Ovary (tissue), 10 donors: ENCODE measurements at regions of chr5 and their contacts with region 1.

Region 1: DNA sequence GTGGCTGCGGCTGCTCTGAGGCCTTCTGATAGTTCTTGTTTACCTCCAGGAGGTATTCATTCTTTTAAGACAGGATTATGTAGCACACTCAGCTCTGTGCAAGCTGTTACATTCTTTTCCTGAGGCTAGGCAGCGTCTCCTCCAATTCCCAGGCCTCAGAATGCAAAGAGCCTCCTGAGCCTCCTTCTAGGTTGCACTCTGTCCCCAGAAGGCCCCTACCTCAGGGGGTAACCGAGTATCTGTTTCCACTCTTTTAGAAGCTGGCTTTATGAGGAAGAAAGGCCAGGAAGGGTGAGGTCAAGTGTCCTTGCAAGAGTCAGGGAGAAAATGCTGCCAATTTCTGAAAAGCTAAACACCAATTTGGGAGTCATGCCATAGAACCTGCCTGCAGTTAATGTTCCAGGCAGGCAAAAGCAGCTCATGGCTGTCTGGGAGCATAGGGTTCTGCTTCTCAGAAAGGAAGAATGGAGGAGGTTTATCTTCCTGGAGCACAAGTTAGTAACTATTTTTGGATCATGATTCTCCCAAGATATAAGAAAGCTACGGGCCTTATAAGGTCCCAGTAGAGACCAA is 178.9 kb downstream of the SEMA6A start:
- DNase-seq: peak in 1 of 5 donors; percentile 24
- H3K4me3 ChIP-seq: no peak overlapping the region
- H3K27ac ChIP-seq: no peak overlapping the region
- H3K4me1 ChIP-seq: peaks cover 8% of the 10 kb centered on the region
- H3K27me3 ChIP-seq: no peaks in the 10 kb centered on the region
- CTCF ChIP-seq: no peak
- EP300 ChIP-seq: no peak
- POLR2A ChIP-seq: no peak

Region 2: DNA sequence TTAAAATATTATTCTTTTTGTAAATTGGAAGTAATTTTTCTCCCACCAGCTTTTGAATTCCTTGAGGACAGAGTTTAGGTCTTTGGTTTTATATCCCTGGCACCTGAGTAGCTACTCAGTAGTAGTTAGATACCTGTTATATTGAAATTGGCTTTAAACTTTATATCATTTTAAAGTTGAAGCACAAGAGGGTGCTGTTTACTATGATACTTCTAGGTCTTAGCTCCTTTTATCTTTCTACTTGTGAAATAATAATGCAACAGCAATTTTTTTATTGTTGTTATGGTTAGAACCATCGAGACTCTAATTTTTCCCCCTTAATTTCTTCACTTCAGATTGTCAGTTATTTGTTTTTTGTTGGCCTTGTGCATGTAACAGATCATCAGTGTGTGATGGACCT is 507.7 kb before region 1 on chr5:
- intact Hi-C with region 1: no loop called
- DNase-seq: no peak
- H3K4me3 ChIP-seq: no peak overlapping the region
- H3K27ac ChIP-seq: no peak overlapping the region
- H3K4me1 ChIP-seq: peaks cover 2% of the 10 kb centered on the region
- H3K27me3 ChIP-seq: no peaks in the 10 kb centered on the region
- CTCF ChIP-seq: peak in 2 of 3 donors; percentile 28 to 43
- EP300 ChIP-seq: no peak
- POLR2A ChIP-seq: no peak

Region 3: DNA sequence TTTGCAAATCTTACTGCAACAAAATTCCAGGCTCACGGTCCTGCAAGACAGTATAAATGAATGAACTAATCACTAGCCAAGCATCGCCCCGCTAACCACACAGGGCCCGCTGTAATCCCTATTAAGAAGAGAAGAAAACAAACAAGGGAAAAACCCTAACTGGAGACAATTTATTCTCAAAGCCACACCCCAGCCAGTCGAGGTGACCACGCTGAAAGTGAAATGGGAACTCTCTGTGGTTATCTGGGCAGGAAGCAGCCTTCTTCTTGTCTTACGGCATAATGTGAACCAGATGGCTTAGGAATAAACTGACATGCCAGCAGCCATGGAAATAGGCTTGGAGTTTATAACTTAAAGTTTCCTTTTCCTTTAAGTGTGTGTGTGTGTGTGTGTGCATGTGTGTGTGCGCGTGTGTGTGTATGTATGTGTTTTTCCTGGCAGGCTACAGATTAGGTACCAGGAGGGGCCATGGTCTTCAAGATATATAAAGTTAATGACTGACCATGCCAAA is 58.8 kb after region 1 on chr5:
- intact Hi-C with region 1: loop called in 1 of 4 experiments (anchors 2 kb)
- DNase-seq: no peak
- H3K4me3 ChIP-seq: no peak overlapping the region
- H3K27ac ChIP-seq: no peak overlapping the region
- H3K4me1 ChIP-seq: peaks cover 1% of the 10 kb centered on the region
- H3K27me3 ChIP-seq: no peaks in the 10 kb centered on the region
- CTCF ChIP-seq: no peak
- EP300 ChIP-seq: no peak
- POLR2A ChIP-seq: no peak

Region 4: GRCh38 chr5:116532762-116533525 is 137.2 kb after region 1 on chr5:
- intact Hi-C with region 1: no loop called
- DNase-seq: no peak
- H3K4me3 ChIP-seq: no peak overlapping the region
- H3K27ac ChIP-seq: no peak overlapping the region
- H3K4me1 ChIP-seq: peaks cover 4% of the 10 kb centered on the region
- H3K27me3 ChIP-seq: no peaks in the 10 kb centered on the region
- CTCF ChIP-seq: no peak
- EP300 ChIP-seq: no peak
- POLR2A ChIP-seq: no peak

Region 5: GRCh38 chr5:116763987-116764866 is 368.5 kb after region 1 on chr5:
- intact Hi-C with region 1: no loop called
- DNase-seq: no peak
- H3K4me3 ChIP-seq: no peak overlapping the region
- H3K27ac ChIP-seq: no peak overlapping the region
- H3K4me1 ChIP-seq: peaks cover 3% of the 10 kb centered on the region
- H3K27me3 ChIP-seq: no peaks in the 10 kb centered on the region
- CTCF ChIP-seq: no peak
- EP300 ChIP-seq: no peak
- POLR2A ChIP-seq: no peak